AG04449 (cell line): ENCODE measurements at regions of chr3 and their contacts with region 1.

Region 1: GRCh38 chr3:20511863-20512505 is 326.0 kb upstream of the SGO1 start:
- DNase-seq: peak; percentile 34
- H3K4me3 ChIP-seq: no peak overlapping the region
- CTCF ChIP-seq: peak; percentile 68

Region 2: GRCh38 chr3:20739814-20740213 is 227.8 kb after region 1 on chr3:
- CTCF ChIA-PET with region 1: interaction called, 14 read pairs
- POLR2A ChIA-PET with region 1: no interaction called
- DNase-seq: no peak
- H3K4me3 ChIP-seq: no peak overlapping the region
- CTCF ChIP-seq: no peak

Region 3: GRCh38 chr3:20930034-20930433 is 418.1 kb after region 1 on chr3:
- CTCF ChIA-PET with region 1: interaction called, 32 read pairs
- POLR2A ChIA-PET with region 1: no interaction called
- DNase-seq: no peak
- H3K4me3 ChIP-seq: no peak overlapping the region
- CTCF ChIP-seq: peak; percentile 19